Gastrocnemius medialis (tissue), 4 donors: ENCODE measurements at regions of chr19 and their contacts with region 1.

Region 1: DNA sequence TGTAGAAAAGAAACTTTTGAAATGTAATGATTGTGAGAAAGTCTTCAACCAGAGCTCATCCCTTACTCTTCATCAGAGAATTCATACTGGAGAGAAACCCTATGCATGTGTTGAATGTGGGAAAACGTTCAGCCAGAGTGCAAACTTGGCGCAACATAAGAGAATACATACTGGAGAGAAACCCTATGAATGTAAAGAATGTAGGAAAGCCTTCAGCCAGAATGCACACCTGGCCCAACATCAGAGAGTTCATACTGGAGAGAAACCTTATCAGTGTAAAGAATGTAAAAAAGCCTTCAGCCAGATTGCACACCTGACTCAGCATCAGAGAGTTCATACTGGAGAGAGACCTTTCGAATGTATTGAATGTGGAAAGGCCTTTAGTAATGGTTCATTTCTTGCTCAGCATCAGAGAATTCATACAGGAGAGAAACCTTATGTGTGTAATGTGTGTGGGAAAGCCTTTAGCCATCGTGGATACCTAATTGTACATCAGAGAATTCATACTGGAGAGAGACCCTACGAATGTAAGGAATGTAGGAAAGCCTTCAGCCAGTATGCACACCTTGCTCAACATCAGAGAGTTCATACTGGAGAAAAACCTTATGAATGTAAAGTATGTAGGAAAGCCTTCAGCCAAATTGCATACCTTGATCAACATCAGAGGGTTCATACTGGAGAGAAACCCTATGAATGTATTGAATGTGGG is 19.3 kb downstream of the ZNF583 start:
- DNase-seq: no peak
- ATAC-seq: no peak
- H3K4me3 ChIP-seq: peak overlapping the region in 1 of 4 donors; percentile 21
- H3K27ac ChIP-seq: no peak overlapping the region
- H3K4me1 ChIP-seq: no peaks in the 10 kb centered on the region
- H3K27me3 ChIP-seq: no peaks in the 10 kb centered on the region
- CTCF ChIP-seq: no peak
- POLR2A ChIP-seq: no peak

Region 2: GRCh38 chr19:56491399-56491798 is 68.0 kb after region 1 on chr19:
- in situ Hi-C with region 1: no loop called
- intact Hi-C with region 1: no loop called
- DNase-seq: no peak
- ATAC-seq: no peak
- H3K4me3 ChIP-seq: no peak overlapping the region
- H3K27ac ChIP-seq: no peak overlapping the region
- H3K4me1 ChIP-seq: no peaks in the 10 kb centered on the region
- H3K27me3 ChIP-seq: no peaks in the 10 kb centered on the region
- CTCF ChIP-seq: no peak
- POLR2A ChIP-seq: no peak

Region 3: GRCh38 chr19:56811480-56811879 is 388.1 kb after region 1 on chr19:
- in situ Hi-C with region 1: no loop called
- intact Hi-C with region 1: loop called (anchors 5 kb)
- DNase-seq: no peak
- ATAC-seq: no peak
- H3K4me3 ChIP-seq: no peak overlapping the region
- H3K27ac ChIP-seq: no peak overlapping the region
- H3K4me1 ChIP-seq: no peaks in the 10 kb centered on the region
- H3K27me3 ChIP-seq: no peaks in the 10 kb centered on the region
- CTCF ChIP-seq: no peak
- POLR2A ChIP-seq: no peak